ENCODE measurements at regions of chr9 and their contacts with region 1.

Region 1: DNA sequence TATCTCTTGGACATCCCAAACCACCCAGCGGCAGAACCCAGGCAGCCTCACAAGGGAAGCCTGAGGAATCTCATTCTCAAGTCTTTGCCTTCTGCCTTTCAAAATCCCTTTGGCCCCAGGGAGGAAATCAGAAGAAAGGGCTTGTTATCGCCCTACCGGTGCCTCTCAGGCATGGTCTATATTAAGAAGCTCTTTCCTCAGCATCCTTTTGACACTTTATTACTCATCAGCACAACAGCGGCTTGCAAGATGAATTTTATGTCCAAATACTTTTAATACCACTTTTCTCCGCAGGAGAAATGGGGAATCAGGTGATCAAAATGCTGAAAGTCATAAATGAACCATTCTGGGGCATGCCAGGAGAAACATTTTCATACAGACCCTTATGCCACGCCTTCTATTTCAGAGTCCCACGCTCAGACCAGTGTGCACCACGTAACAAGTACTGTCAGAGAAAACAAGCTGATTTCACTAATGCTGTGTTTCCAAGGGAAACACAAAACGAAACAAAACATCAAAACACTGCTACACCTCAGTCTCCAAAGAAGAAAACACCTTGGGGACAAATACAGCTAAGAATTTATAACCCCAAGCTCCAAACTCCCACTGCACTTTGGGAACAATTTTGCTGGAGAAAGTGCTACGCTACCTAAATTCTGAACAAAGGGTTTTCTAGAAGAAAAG is 30.0 kb downstream of the RAPGEF1 start:
- DNase-seq: peak; percentile 83
- H3K4me3 ChIP-seq: no peak overlapping the region
- H3K27ac ChIP-seq: peak overlapping the region; percentile 79
- H3K4me1 ChIP-seq: peaks cover 55% of the 10 kb centered on the region
- H3K27me3 ChIP-seq: no peaks in the 10 kb centered on the region
- CTCF ChIP-seq: no peak
- POLR2A ChIP-seq: no peak

Region 2: GRCh38 chr9:131635285-131635684 is 74.6 kb before region 1 on chr9:
- CTCF ChIA-PET with region 1: interaction called, 7 read pairs
- POLR2A ChIA-PET with region 1: interaction called, 4 read pairs
- dilution Hi-C with region 1: no loop called
- intact Hi-C with region 1: loop called (anchors 1 kb)
- DNase-seq: peak; percentile 99
- H3K4me3 ChIP-seq: no peak overlapping the region
- H3K27ac ChIP-seq: peak overlapping the region; percentile 93
- H3K4me1 ChIP-seq: peaks cover 24% of the 10 kb centered on the region
- H3K27me3 ChIP-seq: no peaks in the 10 kb centered on the region
- CTCF ChIP-seq: peak in 1 of 2 donors; percentile 11
- POLR2A ChIP-seq: no peak

Region 3: GRCh38 chr9:131733541-131734061 is 23.7 kb after region 1 on chr9:
- CTCF ChIA-PET with region 1: interaction called, 16 read pairs
- POLR2A ChIA-PET with region 1: interaction called, 7 read pairs
- dilution Hi-C with region 1: no loop called
- intact Hi-C with region 1: loop called (anchors 1 kb)
- DNase-seq: peak; percentile 97
- H3K4me3 ChIP-seq: no peak overlapping the region
- H3K27ac ChIP-seq: peak overlapping the region; percentile 87
- H3K4me1 ChIP-seq: peaks cover 81% of the 10 kb centered on the region
- H3K27me3 ChIP-seq: no peaks in the 10 kb centered on the region
- CTCF ChIP-seq: no peak
- POLR2A ChIP-seq: no peak

Region 4: GRCh38 chr9:131739980-131740648 is 30.2 kb after region 1 on chr9 and contains the start of gene RAPGEF1:
- CTCF ChIA-PET with region 1: interaction called, 20 read pairs
- POLR2A ChIA-PET with region 1: no interaction called
- dilution Hi-C with region 1: no loop called
- intact Hi-C with region 1: no loop called
- DNase-seq: no peak
- H3K4me3 ChIP-seq: peak within 1 kb of the TSS; percentile 36 to 84 (median 75)
- H3K27ac ChIP-seq: peak within 1 kb of the TSS; percentile 73
- H3K4me1 ChIP-seq: peaks cover 32% of the 10 kb centered on the region
- H3K27me3 ChIP-seq: no peaks in the 10 kb centered on the region
- CTCF ChIP-seq: peak; percentile 75 to 77
- POLR2A ChIP-seq: no peak
- total RNA-seq, gene RAPGEF1: 124 TPM in 2 replicates

Region 5: GRCh38 chr9:131809941-131810344 is 100.0 kb after region 1 on chr9:
- CTCF ChIA-PET with region 1: no interaction called
- POLR2A ChIA-PET with region 1: no interaction called
- dilution Hi-C with region 1: no loop called
- intact Hi-C with region 1: no loop called
- DNase-seq: no peak
- H3K4me3 ChIP-seq: no peak overlapping the region
- H3K27ac ChIP-seq: no peak overlapping the region
- H3K4me1 ChIP-seq: no peaks in the 10 kb centered on the region
- H3K27me3 ChIP-seq: peaks cover 0 to 2% of the 10 kb centered on the region in 2 experiments
- CTCF ChIP-seq: no peak
- POLR2A ChIP-seq: no peak

Measured in endothelial cell of umbilical vein (primary cell).